Adrenal gland (tissue), 19 donors: ENCODE measurements at regions of chr6 and their contacts with region 1.

Region 1: DNA sequence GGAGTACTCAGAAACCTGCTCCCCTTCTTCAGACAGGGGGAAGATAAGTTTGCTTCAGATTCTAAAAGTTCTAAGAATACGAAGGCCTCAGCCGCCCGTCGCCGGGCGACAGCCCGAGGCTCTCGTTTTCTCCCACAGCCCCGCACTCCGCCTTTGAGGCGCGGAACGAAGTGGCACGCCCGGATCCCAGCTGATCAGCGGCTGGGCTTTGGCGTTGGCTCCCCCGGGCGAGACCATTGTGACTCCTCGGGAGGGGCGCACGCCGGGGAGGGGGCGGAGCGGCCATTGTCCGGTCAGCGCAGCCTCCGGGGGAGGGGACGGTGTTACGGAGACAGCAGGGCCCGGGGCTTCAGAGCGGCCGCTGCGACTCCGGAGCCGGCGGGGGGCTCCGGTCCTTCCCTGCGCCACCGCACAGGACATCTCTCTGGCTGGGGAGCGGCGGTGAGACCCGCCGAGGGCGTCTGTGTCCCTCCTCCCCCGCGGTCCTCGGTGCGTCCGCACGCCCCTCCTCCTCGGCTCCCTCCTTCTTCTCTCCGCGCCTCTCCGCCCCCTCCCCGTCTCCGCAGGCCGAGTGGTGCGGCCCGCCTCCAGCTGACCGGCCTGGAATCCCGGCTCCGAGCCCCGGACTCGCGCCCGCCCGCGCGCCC is at the start of gene ZFAND3:
- DNase-seq: peak; percentile 95 to 98 (median 97)
- H3K4me3 ChIP-seq: peak within 1 kb of the TSS; percentile 44 to 97 (median 90)
- H3K27ac ChIP-seq: peak within 1 kb of the TSS; percentile 90 to 100 (median 97)
- H3K4me1 ChIP-seq: peaks cover 24 to 48% of the 10 kb centered on the region in 2 donors
- H3K27me3 ChIP-seq: no peaks in the 10 kb centered on the region
- CTCF ChIP-seq: peak in 1 of 6 experiments; percentile 9
- POLR2A ChIP-seq: peak in 1 of 2 donors; percentile 3
- total RNA-seq, gene ZFAND3: 21.4 to 127 (median 50.0) TPM

Region 2: GRCh38 chr6:37663019-37663810 is 156.1 kb before region 1 on chr6:
- intact Hi-C with region 1: no loop called
- DNase-seq: no peak
- H3K4me3 ChIP-seq: no peak overlapping the region
- H3K27ac ChIP-seq: no peak overlapping the region
- H3K4me1 ChIP-seq: no peaks in the 10 kb centered on the region
- H3K27me3 ChIP-seq: no peaks in the 10 kb centered on the region
- CTCF ChIP-seq: no peak
- POLR2A ChIP-seq: no peak

Region 3: GRCh38 chr6:37791156-37791919 is 28.0 kb before region 1 on chr6:
- intact Hi-C with region 1: loop called in 1 of 2 experiments (anchors 2 kb)
- DNase-seq: peak; percentile 93 to 98 (median 96)
- H3K4me3 ChIP-seq: no peak overlapping the region
- H3K27ac ChIP-seq: no peak overlapping the region
- H3K4me1 ChIP-seq: peaks cover 4 to 11% of the 10 kb centered on the region in 2 donors
- H3K27me3 ChIP-seq: no peaks in the 10 kb centered on the region
- CTCF ChIP-seq: peak; percentile 87 to 98 (median 96)
- POLR2A ChIP-seq: no peak

Region 4: DNA sequence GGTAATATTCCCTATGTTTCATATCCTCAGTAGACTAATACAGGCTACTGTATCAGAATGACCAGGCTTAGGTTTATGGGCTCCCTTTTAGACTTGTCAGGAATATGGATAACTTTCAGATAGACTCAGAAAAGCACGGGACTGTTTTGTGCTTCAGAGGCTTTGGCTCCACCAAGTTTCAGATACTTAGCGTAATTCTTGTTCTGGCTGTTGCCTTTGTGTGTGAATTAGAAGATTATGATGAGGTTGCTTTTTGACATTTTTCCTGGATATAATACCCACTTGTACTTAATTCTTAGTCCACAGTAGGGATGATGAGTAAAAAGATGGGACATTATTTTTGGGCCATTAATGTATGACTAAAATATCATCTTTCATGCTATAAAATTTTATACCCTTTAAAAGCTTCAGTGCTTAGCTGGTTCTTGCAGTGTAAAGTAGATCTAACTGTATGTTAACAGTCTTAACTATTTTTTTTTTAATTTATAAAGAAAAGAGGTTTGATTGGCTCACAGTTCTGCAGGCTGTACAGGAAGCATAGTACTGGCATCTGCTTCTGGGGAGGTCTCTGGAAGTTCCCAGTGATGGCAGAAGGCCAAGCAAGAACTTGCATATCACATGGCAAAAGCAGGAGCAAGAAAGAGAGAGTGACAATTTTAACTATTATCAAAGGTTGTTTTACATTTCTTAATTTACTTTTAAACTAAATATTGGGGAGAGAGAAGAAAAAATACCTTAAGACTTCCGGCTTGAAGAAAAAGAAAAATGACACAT is 121.0 kb after region 1 on chr6:
- intact Hi-C with region 1: loop called in 1 of 2 experiments (anchors 10 kb)
- DNase-seq: peak; percentile 48 to 76 (median 54)
- H3K4me3 ChIP-seq: no peak overlapping the region
- H3K27ac ChIP-seq: no peak overlapping the region
- H3K4me1 ChIP-seq: peaks cover 0 to 44% of the 10 kb centered on the region in 2 donors
- H3K27me3 ChIP-seq: no peaks in the 10 kb centered on the region
- CTCF ChIP-seq: no peak
- POLR2A ChIP-seq: no peak

Region 5: GRCh38 chr6:37987018-37987417 is 167.7 kb after region 1 on chr6:
- intact Hi-C with region 1: no loop called
- DNase-seq: peak in 2 of 7 donors; percentile 25 to 52
- H3K4me3 ChIP-seq: no peak overlapping the region
- H3K27ac ChIP-seq: peak overlapping the region in 1 of 5 donors; percentile 58
- H3K4me1 ChIP-seq: peaks cover 39 to 71% of the 10 kb centered on the region in 2 donors
- H3K27me3 ChIP-seq: no peaks in the 10 kb centered on the region
- CTCF ChIP-seq: no peak
- POLR2A ChIP-seq: no peak